Transverse colon (tissue), 4 donors: ENCODE measurements at regions of chr18 and their contacts with region 1.

Region 1: DNA sequence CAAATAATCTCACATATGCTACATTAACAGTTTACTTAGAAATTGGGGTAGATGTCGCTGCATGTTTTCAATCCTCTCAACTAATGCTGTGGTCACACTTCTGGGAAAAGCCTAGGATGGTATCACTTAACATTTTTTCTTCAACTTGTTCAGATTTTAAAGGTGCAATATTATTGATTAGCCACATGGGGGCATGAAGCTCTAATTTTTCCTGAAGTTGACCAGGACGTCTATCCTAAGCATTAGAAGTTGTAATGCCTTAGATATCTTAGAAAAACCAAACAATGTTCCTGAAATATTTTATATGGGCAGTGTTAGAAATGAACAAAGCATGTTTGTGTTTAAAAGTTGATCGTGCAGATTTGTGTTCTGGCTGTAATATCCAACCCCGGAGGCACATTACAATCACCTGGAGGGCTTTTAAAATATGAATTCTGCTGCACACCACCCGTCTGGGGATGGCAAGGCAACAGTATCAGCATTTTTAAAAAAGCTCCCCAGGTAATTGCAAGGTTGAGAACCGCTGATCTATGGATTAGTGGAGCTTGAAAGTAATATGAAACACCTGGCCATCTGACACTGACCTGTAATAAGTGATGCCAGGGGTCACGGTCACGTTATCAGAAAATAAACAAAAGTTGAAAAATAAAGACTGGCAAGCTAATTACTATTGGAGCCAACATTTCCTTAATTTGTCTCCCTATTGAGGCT is 100.5 kb upstream of the LMAN1 start:
- DNase-seq: no peak
- H3K4me3 ChIP-seq: no peak overlapping the region
- H3K27ac ChIP-seq: no peak overlapping the region
- H3K4me1 ChIP-seq: peaks cover 0 to 3% (median 0%) of the 10 kb centered on the region in 4 donors
- H3K27me3 ChIP-seq: no peaks in the 10 kb centered on the region
- CTCF ChIP-seq: peak; percentile 40 to 52 (median 45)
- EP300 ChIP-seq: no peak
- POLR2A ChIP-seq: no peak

Region 2: GRCh38 chr18:59286341-59286740 is 173.2 kb before region 1 on chr18:
- in situ Hi-C with region 1: no loop called
- intact Hi-C with region 1: no loop called
- DNase-seq: no peak
- H3K4me3 ChIP-seq: no peak overlapping the region
- H3K27ac ChIP-seq: no peak overlapping the region
- H3K4me1 ChIP-seq: no peaks in the 10 kb centered on the region
- H3K27me3 ChIP-seq: peaks cover 18% of the 10 kb centered on the region
- CTCF ChIP-seq: no peak
- EP300 ChIP-seq: no peak
- POLR2A ChIP-seq: no peak

Region 3: DNA sequence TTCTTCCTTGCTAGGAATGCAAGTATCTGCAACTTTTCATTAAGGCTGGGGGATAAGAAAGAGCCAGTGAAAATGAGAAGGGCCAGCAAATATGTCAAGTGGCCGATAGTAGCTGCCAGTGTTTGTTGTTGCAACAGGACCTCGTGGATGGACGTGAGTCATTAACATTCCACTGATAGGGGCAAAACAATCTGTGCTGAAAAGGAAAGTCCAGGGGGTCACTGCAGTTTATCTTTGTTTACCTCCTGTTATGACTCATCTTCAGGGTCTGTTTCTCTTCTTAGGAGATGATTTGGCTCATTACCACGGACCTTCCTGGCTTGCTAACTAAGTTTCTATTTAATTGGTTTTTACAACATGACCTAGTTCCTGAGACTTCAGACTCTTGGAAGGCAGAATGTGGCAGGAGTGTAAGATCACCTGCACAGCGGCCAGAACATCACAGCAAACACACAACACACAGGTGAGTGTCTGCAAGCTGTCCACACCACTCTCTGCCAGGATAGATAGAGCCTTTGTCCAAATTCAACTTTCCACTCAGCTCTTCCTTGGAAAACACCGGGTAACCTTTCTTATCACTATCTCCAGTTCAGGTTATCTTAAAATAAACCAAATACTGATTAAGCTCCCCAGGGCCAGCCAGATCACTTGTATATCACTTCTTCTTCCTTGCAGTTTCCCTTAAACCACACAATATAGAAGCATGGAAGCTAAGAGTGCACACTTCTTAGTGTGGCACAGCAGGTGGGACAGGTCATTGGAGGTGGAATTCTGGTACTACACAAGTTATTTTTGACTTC is 57.0 kb after region 1 on chr18:
- in situ Hi-C with region 1: no loop called
- intact Hi-C with region 1: no loop called
- DNase-seq: peak; percentile 16
- H3K4me3 ChIP-seq: no peak overlapping the region
- H3K27ac ChIP-seq: peak overlapping the region in 3 of 4 donors; percentile 5 to 75 (median 61)
- H3K4me1 ChIP-seq: peaks cover 0 to 14% (median 6%) of the 10 kb centered on the region in 4 donors
- H3K27me3 ChIP-seq: no peaks in the 10 kb centered on the region
- CTCF ChIP-seq: no peak
- EP300 ChIP-seq: peak; percentile 32
- POLR2A ChIP-seq: no peak

Region 4: DNA sequence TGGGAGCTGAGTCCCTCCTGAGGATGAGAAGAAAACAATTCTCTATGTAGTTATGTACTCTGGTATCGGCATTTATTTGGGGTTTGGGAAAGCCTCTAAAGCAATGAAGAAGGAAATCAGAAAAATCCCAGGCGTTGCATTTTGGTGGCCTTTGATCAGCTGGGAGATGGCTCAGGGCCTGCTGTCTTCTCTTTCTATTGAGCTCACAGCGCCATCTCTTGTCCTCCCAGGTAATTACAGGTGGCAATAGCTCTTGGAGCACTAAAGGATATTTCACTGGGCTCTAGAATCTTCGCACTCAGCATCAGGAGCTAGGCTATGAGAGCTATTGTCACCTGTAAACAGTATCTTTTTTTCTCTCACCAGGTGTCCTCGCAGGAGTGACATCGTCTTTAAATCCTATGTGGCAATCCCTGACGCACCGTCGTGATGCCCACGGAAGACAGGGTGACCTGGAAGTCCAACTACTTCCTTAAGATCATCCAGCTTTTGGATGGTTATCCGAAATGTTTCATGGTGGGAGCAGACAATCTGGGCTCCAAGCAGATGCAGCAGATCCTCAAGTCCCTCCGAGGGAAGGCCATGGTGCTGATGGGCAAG is 364.2 kb after region 1 on chr18:
- in situ Hi-C with region 1: loop called in 3 of 4 experiments (anchors 5 to 25 kb)
- intact Hi-C with region 1: loop called (anchors 2 kb)
- DNase-seq: peak; percentile 75
- H3K4me3 ChIP-seq: no peak overlapping the region
- H3K27ac ChIP-seq: no peak overlapping the region
- H3K4me1 ChIP-seq: peaks cover 0 to 4% (median 2%) of the 10 kb centered on the region in 4 donors
- H3K27me3 ChIP-seq: peaks cover 4% of the 10 kb centered on the region
- CTCF ChIP-seq: peak; percentile 69 to 80 (median 74)
- EP300 ChIP-seq: no peak
- POLR2A ChIP-seq: no peak